Transverse colon (tissue), 4 donors: ENCODE measurements at regions of chr14 and their contacts with region 1.

Region 1: GRCh38 chr14:63282997-63283883 is 35.5 kb downstream of the GPHB5 start:
- DNase-seq: no peak
- H3K4me3 ChIP-seq: no peak overlapping the region
- H3K27ac ChIP-seq: peak overlapping the region in 2 of 4 donors; percentile 14 to 23
- H3K4me1 ChIP-seq: peaks cover 0 to 15% (median 2%) of the 10 kb centered on the region in 4 donors
- H3K27me3 ChIP-seq: no peaks in the 10 kb centered on the region
- CTCF ChIP-seq: no peak
- EP300 ChIP-seq: no peak
- POLR2A ChIP-seq: no peak

Region 2: GRCh38 chr14:62691613-62692487 is 591.4 kb before region 1 on chr14:
- in situ Hi-C with region 1: no loop called
- intact Hi-C with region 1: no loop called
- DNase-seq: no peak
- H3K4me3 ChIP-seq: no peak overlapping the region
- H3K27ac ChIP-seq: no peak overlapping the region
- H3K4me1 ChIP-seq: no peaks in the 10 kb centered on the region
- H3K27me3 ChIP-seq: no peaks in the 10 kb centered on the region
- CTCF ChIP-seq: no peak
- EP300 ChIP-seq: no peak
- POLR2A ChIP-seq: no peak

Region 3: GRCh38 chr14:63203618-63204406 is 79.4 kb before region 1 on chr14:
- in situ Hi-C with region 1: no loop called
- intact Hi-C with region 1: no loop called
- DNase-seq: peak; percentile 57
- H3K4me3 ChIP-seq: peak overlapping the region; percentile 30 to 45 (median 34)
- H3K27ac ChIP-seq: peak overlapping the region; percentile 76 to 91 (median 84)
- H3K4me1 ChIP-seq: peaks cover 0 to 9% (median 0%) of the 10 kb centered on the region in 4 donors
- H3K27me3 ChIP-seq: no peaks in the 10 kb centered on the region
- CTCF ChIP-seq: no peak
- EP300 ChIP-seq: no peak
- POLR2A ChIP-seq: peak; percentile 24

Region 4: DNA sequence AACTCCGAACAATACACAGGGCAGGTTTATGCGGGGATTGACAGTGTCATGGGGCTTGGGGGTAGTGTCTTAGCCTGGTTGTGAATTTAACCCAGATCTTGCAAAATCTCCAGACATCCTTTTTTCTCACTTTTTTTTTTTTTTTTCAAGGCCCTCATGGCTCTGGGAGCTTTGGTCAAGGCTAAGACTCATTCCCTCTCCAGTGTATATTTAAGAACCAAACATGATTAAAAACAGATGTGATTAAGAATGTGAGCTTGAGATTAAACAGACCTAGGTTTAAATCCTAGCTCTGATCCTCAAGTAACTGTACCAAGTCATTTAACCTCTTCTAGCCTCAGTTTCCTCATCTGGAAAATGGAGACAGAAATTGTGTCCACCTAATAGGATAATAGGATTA is 1977.5 kb after region 1 on chr14:
- in situ Hi-C with region 1: no loop called
- intact Hi-C with region 1: loop called (anchors 5 kb)
- DNase-seq: no peak
- H3K4me3 ChIP-seq: no peak overlapping the region
- H3K27ac ChIP-seq: no peak overlapping the region
- H3K4me1 ChIP-seq: peaks cover 0 to 9% (median 3%) of the 10 kb centered on the region in 4 donors
- H3K27me3 ChIP-seq: no peaks in the 10 kb centered on the region
- CTCF ChIP-seq: no peak
- EP300 ChIP-seq: no peak
- POLR2A ChIP-seq: no peak